ENCODE measurements at regions of chr2 and their contacts with region 1.

Region 1: DNA sequence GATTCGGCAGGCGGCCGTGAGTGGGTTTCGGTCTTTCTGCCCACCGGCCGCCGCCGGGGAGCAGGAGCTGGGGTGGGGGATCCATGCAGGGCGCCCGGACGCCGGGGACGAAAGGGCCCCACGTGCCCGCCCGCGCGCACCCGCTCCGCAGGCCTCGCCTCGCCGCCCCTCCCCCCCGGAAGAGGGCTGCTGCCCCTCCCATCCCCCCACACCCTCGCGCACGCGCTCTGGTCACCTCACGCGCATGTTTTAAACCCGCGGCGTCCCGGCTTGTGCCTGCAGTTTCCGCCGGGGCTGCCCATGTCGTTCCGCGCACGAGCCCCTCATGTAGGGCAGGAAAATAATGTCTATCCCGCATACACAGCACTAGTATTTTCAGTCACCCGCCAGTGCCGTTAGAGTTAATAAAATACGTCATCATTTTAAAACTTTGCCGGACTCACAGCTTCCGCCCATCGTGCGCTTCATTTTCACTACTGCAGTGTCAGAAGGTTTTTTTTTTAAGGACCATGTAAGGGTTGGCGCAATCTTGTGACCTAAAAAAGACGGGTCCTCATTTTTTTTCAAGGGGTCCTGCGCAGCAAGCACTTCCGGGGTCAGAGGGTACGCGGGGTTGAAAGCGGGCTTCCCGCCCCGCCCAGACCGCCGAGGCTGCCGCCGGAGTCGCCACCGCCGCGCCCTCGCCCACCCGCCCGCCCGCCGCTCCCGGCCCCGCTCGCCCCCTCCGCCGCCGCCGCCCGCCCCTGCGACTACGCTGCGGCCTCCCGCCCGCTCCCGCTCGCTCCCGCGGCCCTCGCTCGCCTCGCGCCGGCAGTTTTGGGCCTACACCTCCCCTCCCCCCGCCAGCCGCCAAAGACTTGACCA is at the start of gene PCBP1:
- DNase-seq: peak; percentile 95
- H3K4me3 ChIP-seq: peak within 1 kb of the TSS; percentile 98
- H3K27ac ChIP-seq: peak within 1 kb of the TSS; percentile 94
- H3K4me1 ChIP-seq: peaks cover 61% of the 10 kb centered on the region
- CTCF ChIP-seq: no peak
- total RNA-seq, gene PCBP1: 54.8 and 58.2 TPM in 2 replicates

Region 2: GRCh38 chr2:69829256-69830046 is 257.6 kb before region 1 on chr2 and contains the start of gene GMCL1:
- CTCF ChIA-PET with region 1: no interaction called
- POLR2A ChIA-PET with region 1: no interaction called
- intact Hi-C with region 1: loop called (anchors 5 kb)
- DNase-seq: peak; percentile 98
- H3K4me3 ChIP-seq: peak within 1 kb of the TSS; percentile 94
- H3K27ac ChIP-seq: peak within 1 kb of the TSS; percentile 65
- H3K4me1 ChIP-seq: peaks cover 27% of the 10 kb centered on the region
- CTCF ChIP-seq: no peak
- total RNA-seq, gene GMCL1: 11.9 and 14.4 TPM in 2 replicates

Region 3: DNA sequence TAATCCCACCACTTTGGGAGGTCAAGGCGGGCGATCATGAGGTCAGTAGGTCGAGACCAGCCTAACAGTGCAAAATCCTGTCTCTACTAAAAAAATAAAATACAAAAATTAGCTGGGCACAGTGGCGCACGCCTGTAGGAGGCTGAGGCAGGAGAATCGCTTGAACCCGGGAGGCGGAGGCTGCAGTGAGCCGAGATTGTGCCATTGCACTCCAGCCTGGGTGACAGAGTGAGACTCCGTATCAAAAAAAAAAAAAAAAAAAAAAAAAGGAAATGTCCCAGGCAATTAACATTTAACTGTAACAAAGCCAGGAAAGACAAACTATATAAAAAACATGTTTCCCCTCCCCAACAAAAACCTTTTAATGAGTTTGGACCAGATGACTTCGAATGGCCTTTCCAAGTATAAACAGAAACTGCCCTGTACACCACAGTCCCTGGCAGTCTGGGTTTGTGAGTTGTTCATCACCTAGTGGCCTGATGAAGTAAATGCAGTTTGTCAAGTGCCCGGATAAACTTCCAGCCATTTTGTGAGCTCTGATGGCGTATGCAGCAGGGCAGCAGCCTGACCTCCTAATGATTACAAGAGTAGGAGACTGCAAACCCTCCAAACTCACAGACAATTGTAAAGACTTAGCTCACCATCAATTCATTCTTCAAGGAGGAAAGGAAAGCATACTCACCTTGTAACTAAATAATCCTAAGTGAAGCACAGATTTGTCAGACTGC is 16.4 kb before region 1 on chr2:
- CTCF ChIA-PET with region 1: interaction called, 5 read pairs
- POLR2A ChIA-PET with region 1: interaction called, 34 read pairs
- intact Hi-C with region 1: no loop called
- DNase-seq: peak; percentile 88
- H3K4me3 ChIP-seq: no peak overlapping the region
- H3K27ac ChIP-seq: peak overlapping the region; percentile 69
- H3K4me1 ChIP-seq: peaks cover 40% of the 10 kb centered on the region
- CTCF ChIP-seq: peak; percentile 86

Region 4: GRCh38 chr2:70124983-70125480 is 38.0 kb after region 1 on chr2:
- CTCF ChIA-PET with region 1: no interaction called
- POLR2A ChIA-PET with region 1: interaction called, 21 read pairs
- intact Hi-C with region 1: loop called (anchors 1 kb)
- DNase-seq: peak; percentile 65
- H3K4me3 ChIP-seq: peak overlapping the region; percentile 63
- H3K27ac ChIP-seq: peak overlapping the region; percentile 83
- H3K4me1 ChIP-seq: peaks cover 89% of the 10 kb centered on the region
- CTCF ChIP-seq: no peak

Region 5: DNA sequence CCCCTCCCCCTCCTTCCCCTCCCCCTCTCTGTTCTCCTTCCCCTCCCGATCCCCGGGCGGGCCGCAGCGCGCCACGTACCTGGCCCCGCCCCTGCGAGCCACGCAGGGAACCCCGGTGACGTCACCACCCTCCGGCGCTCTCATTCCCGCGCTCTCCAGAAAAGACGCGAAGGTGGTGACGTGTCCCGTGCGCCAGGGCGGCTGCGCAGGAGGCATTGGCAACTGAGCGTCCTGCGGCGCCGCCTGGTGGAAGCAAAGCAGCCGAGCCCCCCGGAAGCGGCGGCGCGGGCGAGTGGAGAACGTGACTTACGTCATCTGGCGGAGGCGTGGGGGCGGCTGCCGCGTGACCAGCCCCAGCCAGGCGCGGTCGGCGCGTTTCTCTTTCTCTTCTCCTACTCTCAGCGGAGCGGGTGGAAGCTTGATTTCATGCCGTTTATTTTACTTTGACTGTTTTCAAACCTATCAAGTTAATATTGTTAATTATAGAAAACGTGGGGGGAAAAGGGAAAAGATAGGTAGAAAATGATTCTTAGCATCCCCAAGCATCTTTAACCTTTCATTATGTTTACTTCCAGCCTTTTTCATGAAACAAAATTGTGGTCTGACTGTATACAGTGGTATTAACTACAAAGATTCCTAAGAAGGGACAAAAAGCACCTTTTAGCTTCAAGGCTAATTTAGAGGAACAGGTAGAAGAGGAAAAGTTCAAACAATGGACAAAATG is 55.7 kb after region 1 on chr2:
- CTCF ChIA-PET with region 1: interaction called, 3 read pairs
- POLR2A ChIA-PET with region 1: interaction called, 8 read pairs
- intact Hi-C with region 1: loop called (anchors 1 kb)
- DNase-seq: peak; percentile 100
- H3K4me3 ChIP-seq: peak overlapping the region; percentile 71
- H3K27ac ChIP-seq: peak overlapping the region; percentile 73
- H3K4me1 ChIP-seq: peaks cover 25% of the 10 kb centered on the region
- CTCF ChIP-seq: peak; percentile 84

Region 6: GRCh38 chr2:70248181-70248847 is 161.2 kb after region 1 on chr2 and contains the start of gene TIA1:
- CTCF ChIA-PET with region 1: no interaction called
- POLR2A ChIA-PET with region 1: no interaction called
- intact Hi-C with region 1: loop called (anchors 5 kb)
- DNase-seq: peak; percentile 100
- H3K4me3 ChIP-seq: peak within 1 kb of the TSS; percentile 86
- H3K27ac ChIP-seq: peak within 1 kb of the TSS; percentile 86
- H3K4me1 ChIP-seq: peaks cover 29% of the 10 kb centered on the region
- CTCF ChIP-seq: no peak
- total RNA-seq, gene TIA1: 129 and 147 TPM in 2 replicates

Measured in OCI-LY7 (cell line).